Right cardiac atrium (tissue), 5 donors: ENCODE measurements at regions of chr15 and their contacts with region 1.

Region 1: GRCh38 chr15:74382004-74382816 is 14.8 kb upstream of the CYP11A1 start:
- DNase-seq: peak; percentile 86 to 94 (median 94)
- ATAC-seq: peak; percentile 83 to 86
- H3K4me3 ChIP-seq: no peak overlapping the region
- H3K27ac ChIP-seq: no peak overlapping the region
- H3K4me1 ChIP-seq: peaks cover 6% of the 10 kb centered on the region
- H3K27me3 ChIP-seq: no peaks in the 10 kb centered on the region

Region 2: GRCh38 chr15:74146277-74146800 is 235.9 kb before region 1 on chr15:
- intact Hi-C with region 1: no loop called
- DNase-seq: no peak
- ATAC-seq: no peak
- H3K4me3 ChIP-seq: no peak overlapping the region
- H3K27ac ChIP-seq: no peak overlapping the region
- H3K4me1 ChIP-seq: no peaks in the 10 kb centered on the region
- H3K27me3 ChIP-seq: no peaks in the 10 kb centered on the region

Region 3: DNA sequence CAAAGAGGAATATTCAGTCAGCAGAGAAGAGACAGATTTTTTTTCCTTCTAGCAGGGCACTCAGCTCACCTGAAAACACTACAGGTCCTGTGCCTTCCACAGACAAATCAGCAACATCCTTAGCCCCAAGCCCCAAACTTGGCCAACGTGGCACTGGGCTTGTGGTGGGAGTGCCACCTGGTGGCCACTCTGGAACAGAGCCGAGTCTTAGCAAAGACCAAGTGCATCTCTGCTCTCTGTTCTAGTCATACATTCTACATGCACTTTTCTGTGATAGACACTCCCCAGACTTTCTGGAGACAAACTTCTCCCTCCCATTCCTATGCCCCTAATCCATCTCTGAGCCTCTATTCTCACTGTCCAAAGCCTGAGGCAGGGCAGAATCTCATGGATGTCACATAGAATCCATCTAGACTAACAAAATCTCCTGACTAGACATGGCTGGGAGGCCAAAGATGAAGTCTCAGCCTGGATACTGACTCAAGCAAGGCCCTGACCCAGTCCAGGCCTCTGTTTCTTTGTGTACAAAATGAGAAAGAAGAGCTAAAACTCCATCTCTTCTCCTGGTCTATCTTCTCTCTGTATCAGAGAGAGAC is 56.6 kb after region 1 on chr15:
- intact Hi-C with region 1: loop called (anchors 2 to 5 kb)
- DNase-seq: peak; percentile 69 to 88 (median 87)
- ATAC-seq: peak; percentile 52 to 63
- H3K4me3 ChIP-seq: no peak overlapping the region
- H3K27ac ChIP-seq: no peak overlapping the region
- H3K4me1 ChIP-seq: no peaks in the 10 kb centered on the region
- H3K27me3 ChIP-seq: no peaks in the 10 kb centered on the region

Region 4: GRCh38 chr15:74489518-74490338 is 107.5 kb after region 1 on chr15:
- intact Hi-C with region 1: loop called in 3 of 4 experiments (anchors 5 kb)
- DNase-seq: peak; percentile 20 to 72 (median 64)
- ATAC-seq: peak; percentile 47 to 66
- H3K4me3 ChIP-seq: no peak overlapping the region
- H3K27ac ChIP-seq: no peak overlapping the region
- H3K4me1 ChIP-seq: no peaks in the 10 kb centered on the region
- H3K27me3 ChIP-seq: no peaks in the 10 kb centered on the region